Endothelial cell of umbilical vein (primary cell): ENCODE measurements at regions of chr1 and their contacts with region 1.

Region 1: GRCh38 chr1:85607126-85607912 is 26.8 kb downstream of the CCN1 start:
- DNase-seq: peak; percentile 91
- H3K4me3 ChIP-seq: peak overlapping the region in 1 of 3 experiments; percentile 4
- H3K27ac ChIP-seq: peak overlapping the region; percentile 85
- H3K4me1 ChIP-seq: peaks cover 27% of the 10 kb centered on the region
- H3K27me3 ChIP-seq: no peaks in the 10 kb centered on the region
- CTCF ChIP-seq: no peak
- POLR2A ChIP-seq: peak; percentile 76

Region 2: GRCh38 chr1:85200870-85201339 is 406.4 kb before region 1 on chr1 and contains the start of gene SYDE2:
- CTCF ChIA-PET with region 1: no interaction called
- POLR2A ChIA-PET with region 1: no interaction called
- dilution Hi-C with region 1: no loop called
- intact Hi-C with region 1: loop called (anchors 2 kb)
- DNase-seq: peak; percentile 72
- H3K4me3 ChIP-seq: peak within 1 kb of the TSS; percentile 11 to 66 (median 64)
- H3K27ac ChIP-seq: peak within 1 kb of the TSS; percentile 69
- H3K4me1 ChIP-seq: peaks cover 16% of the 10 kb centered on the region
- H3K27me3 ChIP-seq: peaks cover 0 to 2% of the 10 kb centered on the region in 2 experiments
- CTCF ChIP-seq: no peak
- POLR2A ChIP-seq: peak; percentile 69
- total RNA-seq, gene SYDE2: 2.9 and 3.1 TPM in 2 replicates

Region 3: DNA sequence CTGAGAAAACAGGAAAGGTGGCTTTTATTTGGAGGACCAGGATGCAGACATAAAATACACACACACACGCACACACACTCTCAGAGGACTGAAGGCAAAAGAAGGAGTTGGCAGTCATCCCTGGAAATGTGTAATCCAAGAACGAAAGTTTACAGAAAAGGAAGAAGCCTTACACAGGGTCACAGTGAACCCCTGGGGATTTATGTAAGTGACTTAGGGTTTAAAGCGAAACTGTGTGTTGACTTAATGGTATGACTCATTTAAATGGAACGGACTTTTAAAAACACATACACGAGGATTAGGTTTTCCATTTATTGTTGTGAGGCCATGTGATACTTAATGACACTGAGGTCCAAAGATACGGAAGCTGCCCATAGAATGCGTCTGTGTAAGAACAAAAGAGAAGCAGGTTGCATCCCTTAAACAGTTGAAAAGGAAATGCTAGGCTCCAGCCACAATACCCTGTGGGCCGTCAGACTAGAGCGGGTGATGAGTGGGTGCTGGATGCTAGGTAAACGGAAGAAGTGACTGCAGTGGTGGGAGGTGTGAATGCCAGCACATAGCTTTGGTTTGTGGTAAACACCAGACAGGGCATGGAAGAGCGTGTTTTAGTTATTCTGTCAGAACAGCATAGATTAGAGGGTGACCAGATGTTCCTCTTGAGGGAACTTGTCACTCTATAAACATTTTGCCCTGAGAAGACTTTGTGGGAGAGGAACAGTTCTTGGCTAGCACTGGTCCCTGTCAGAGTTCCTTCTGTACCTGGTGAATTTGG is 309.3 kb before region 1 on chr1:
- CTCF ChIA-PET with region 1: interaction called, 4 read pairs
- POLR2A ChIA-PET with region 1: no interaction called
- dilution Hi-C with region 1: no loop called
- intact Hi-C with region 1: loop called (anchors 1 kb)
- DNase-seq: peak; percentile 100
- H3K4me3 ChIP-seq: no peak overlapping the region
- H3K27ac ChIP-seq: peak overlapping the region; percentile 95
- H3K4me1 ChIP-seq: peaks cover 43% of the 10 kb centered on the region
- H3K27me3 ChIP-seq: no peaks in the 10 kb centered on the region
- CTCF ChIP-seq: no peak
- POLR2A ChIP-seq: peak; percentile 55

Region 4: GRCh38 chr1:85581802-85582686 is 25.3 kb before region 1 on chr1:
- CTCF ChIA-PET with region 1: interaction called, 24 read pairs
- POLR2A ChIA-PET with region 1: interaction called, 32 read pairs
- dilution Hi-C with region 1: no loop called
- intact Hi-C with region 1: loop called (anchors 1 kb)
- DNase-seq: peak; percentile 54
- H3K4me3 ChIP-seq: peak overlapping the region; percentile 57 to 98 (median 78)
- H3K27ac ChIP-seq: peak overlapping the region; percentile 92
- H3K4me1 ChIP-seq: peaks cover 16% of the 10 kb centered on the region
- H3K27me3 ChIP-seq: no peaks in the 10 kb centered on the region
- CTCF ChIP-seq: peak in 1 of 2 donors; percentile 7
- POLR2A ChIP-seq: peak; percentile 45

Region 5: GRCh38 chr1:85707990-85708828 is 100.9 kb after region 1 on chr1 and contains the start of gene ZNHIT6:
- CTCF ChIA-PET with region 1: interaction called, 3 read pairs
- POLR2A ChIA-PET with region 1: no interaction called
- dilution Hi-C with region 1: no loop called
- intact Hi-C with region 1: loop called (anchors 5 kb)
- DNase-seq: peak; percentile 95
- H3K4me3 ChIP-seq: peak within 1 kb of the TSS; percentile 43 to 82 (median 69)
- H3K27ac ChIP-seq: peak within 1 kb of the TSS; percentile 41
- H3K4me1 ChIP-seq: peaks cover 13% of the 10 kb centered on the region
- H3K27me3 ChIP-seq: no peaks in the 10 kb centered on the region
- CTCF ChIP-seq: peak; percentile 17 to 42
- POLR2A ChIP-seq: peak; percentile 60
- total RNA-seq, gene ZNHIT6: 18.8 and 21.4 TPM in 2 replicates